GM23248 (cell line): ENCODE measurements at regions of chr3 and their contacts with region 1.

Region 1: GRCh38 chr3:179322286-179323196 is at the start of gene ZNF639:
- DNase-seq: peak; percentile 94
- H3K4me3 ChIP-seq: peak within 1 kb of the TSS; percentile 89
- H3K27ac ChIP-seq: peak within 1 kb of the TSS; percentile 94
- H3K4me1 ChIP-seq: peaks cover 21% of the 10 kb centered on the region
- H3K27me3 ChIP-seq: no peaks in the 10 kb centered on the region
- total RNA-seq, gene ZNF639: 68.0 and 76.9 TPM in 2 replicates

Region 2: GRCh38 chr3:178436773-178437172 is 885.8 kb before region 1 on chr3:
- in situ Hi-C with region 1: loop called (anchors 25 kb)
- DNase-seq: peak; percentile 80
- H3K4me3 ChIP-seq: no peak overlapping the region
- H3K27ac ChIP-seq: no peak overlapping the region
- H3K4me1 ChIP-seq: 0 out of 2 replicates have a peak, but pooled peaks cover 4% of the 10 kb centered on the region
- H3K27me3 ChIP-seq: no peaks in the 10 kb centered on the region

Region 3: GRCh38 chr3:179015551-179016020 is 307.0 kb before region 1 on chr3:
- in situ Hi-C with region 1: loop called (anchors 5 kb)
- DNase-seq: peak; percentile 80
- H3K4me3 ChIP-seq: no peak overlapping the region
- H3K27ac ChIP-seq: no peak overlapping the region; the same call in 1 of the 2 replicates
- H3K4me1 ChIP-seq: peaks cover 12% of the 10 kb centered on the region; the same call in 1 of the 2 replicates
- H3K27me3 ChIP-seq: no peaks in the 10 kb centered on the region

Region 4: DNA sequence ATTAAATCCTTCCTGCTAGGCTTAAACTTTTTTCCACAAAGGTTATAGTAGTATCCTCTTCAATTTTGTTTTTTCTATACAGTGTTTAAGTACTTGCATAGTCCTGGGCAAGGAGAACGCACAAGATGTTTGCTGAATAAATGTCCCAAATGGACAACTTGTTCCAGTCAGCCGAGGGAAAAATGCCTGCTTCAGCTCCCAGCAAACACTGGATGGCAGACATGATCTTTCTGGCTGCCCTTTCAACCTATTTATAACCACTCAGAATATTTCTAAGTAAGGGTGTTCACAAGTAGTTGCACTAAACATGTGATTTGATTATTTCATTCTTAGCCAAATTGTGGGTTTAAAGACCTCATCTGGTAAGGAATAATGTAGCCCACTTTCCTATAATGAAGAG is 99.0 kb after region 1 on chr3:
- in situ Hi-C with region 1: no loop called
- DNase-seq: peak; percentile 65
- H3K4me3 ChIP-seq: no peak overlapping the region
- H3K27ac ChIP-seq: 0 out of 2 replicates have a peak overlapping the region, but pooled peaks have one; percentile 7
- H3K4me1 ChIP-seq: peaks cover 17% of the 10 kb centered on the region
- H3K27me3 ChIP-seq: no peaks in the 10 kb centered on the region

Region 5: GRCh38 chr3:179788996-179789395 is 466.5 kb after region 1 on chr3:
- in situ Hi-C with region 1: no loop called
- DNase-seq: no peak
- H3K4me3 ChIP-seq: no peak overlapping the region
- H3K27ac ChIP-seq: no peak overlapping the region
- H3K4me1 ChIP-seq: no peaks in the 10 kb centered on the region
- H3K27me3 ChIP-seq: no peaks in the 10 kb centered on the region